ENCODE measurements at regions of chr1 and their contacts with region 1.

Region 1: DNA sequence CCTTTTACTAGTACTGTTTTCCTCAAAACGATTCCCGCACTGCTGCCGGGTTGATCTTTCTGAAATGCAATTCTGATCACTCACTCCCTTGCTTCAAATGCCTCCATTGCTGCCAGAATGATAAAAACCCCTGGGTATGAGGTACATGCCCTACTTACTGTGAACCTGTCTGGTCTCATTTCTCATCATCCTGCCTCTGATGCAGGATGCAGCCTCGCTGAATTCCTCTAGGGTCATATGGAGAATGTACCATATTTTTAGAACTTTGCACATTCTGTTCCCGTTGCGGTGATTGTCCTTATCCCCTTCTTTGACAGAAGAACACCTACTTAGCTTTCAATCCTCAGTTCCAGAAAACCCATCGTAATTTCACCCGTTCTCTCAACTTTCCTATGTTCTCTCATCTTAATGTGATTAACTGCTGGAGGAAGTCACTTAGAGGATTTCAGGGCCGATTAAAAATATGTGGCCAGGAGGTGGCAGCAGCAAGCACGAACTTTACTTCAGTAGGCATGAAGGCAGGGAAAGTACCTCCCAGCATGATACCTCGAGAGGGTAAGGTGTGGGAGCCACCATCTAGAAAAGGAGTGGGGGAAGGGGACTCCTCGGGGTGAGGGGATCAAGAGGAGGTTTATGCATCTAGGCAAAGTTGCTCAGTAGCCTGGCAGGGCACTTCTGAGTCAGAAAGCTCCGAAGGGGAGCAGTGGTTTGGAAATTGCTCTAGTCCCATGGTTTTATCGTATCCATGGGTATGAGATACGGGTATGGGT is 361.5 kb upstream of the ZP4 start:
- DNase-seq: peak; percentile 84
- H3K4me3 Mint-ChIP-seq: no peak overlapping the region
- H3K27ac Mint-ChIP-seq: no peak overlapping the region
- H3K4me1 Mint-ChIP-seq: peaks cover 7% of the 10 kb centered on the region
- H3K27me3 Mint-ChIP-seq: no peaks in the 10 kb centered on the region
- CTCF ChIP-seq: peak; percentile 87

Region 2: GRCh38 chr1:237851210-237851845 is 400.9 kb before region 1 on chr1:
- CTCF ChIA-PET with region 1: interaction called, 11 read pairs
- POLR2A ChIA-PET with region 1: no interaction called
- intact Hi-C with region 1: no loop called
- DNase-seq: peak; percentile 87
- H3K4me3 Mint-ChIP-seq: no peak overlapping the region
- H3K27ac Mint-ChIP-seq: no peak overlapping the region
- H3K4me1 Mint-ChIP-seq: no peaks in the 10 kb centered on the region
- H3K27me3 Mint-ChIP-seq: no peaks in the 10 kb centered on the region
- CTCF ChIP-seq: peak; percentile 97

Region 3: DNA sequence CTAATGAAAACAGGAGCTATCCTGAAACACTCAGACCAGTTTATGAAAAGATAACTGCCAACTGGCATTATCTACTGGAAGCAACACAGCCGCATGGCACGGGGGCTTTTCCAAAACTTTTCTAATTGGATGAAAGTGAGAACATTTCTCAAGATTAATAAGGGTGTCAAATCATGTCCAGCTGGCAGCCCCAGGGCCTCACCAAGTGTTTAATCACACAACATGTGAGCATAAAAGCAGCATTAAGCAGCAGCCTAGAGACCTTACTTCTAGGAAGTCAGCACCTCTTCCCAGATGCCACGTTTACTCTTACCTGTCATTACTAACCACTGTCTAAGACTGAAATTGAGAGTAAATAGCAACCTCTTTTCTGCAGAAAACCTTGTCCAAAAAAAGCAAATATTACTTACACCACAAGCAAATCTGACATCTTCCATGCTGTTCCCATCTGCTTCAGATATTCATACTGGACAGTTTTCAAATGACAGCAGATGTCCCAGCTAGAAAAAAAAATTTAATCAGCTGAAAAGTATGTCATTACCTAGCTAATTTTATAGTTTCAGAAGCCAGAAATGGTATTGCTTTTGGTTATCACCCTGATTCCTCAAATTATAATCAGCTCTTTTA is 20.0 kb before region 1 on chr1:
- CTCF ChIA-PET with region 1: interaction called, 25 read pairs
- POLR2A ChIA-PET with region 1: no interaction called
- intact Hi-C with region 1: no loop called
- DNase-seq: no peak
- H3K4me3 Mint-ChIP-seq: no peak overlapping the region
- H3K27ac Mint-ChIP-seq: no peak overlapping the region
- H3K4me1 Mint-ChIP-seq: no peaks in the 10 kb centered on the region
- H3K27me3 Mint-ChIP-seq: no peaks in the 10 kb centered on the region
- CTCF ChIP-seq: no peak

Region 4: DNA sequence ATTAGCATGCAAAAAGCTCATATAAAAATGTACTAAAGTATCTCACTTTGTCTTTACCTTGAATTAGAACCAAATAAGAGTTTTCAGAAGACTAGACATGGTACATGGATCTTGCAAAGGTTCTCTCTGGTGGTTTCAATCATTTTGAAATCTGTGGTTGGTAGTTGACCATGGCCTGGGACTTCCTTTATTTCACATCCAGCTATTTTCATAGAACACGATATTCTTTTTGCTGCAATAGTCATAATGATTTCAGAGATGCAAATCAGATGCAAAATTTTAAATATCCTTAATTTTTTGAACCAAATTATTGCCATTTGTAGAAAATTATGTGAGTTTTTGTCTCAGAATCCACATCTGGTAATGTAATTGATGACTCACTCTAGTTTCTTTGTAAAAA is 13.6 kb after region 1 on chr1:
- CTCF ChIA-PET with region 1: interaction called, 16 read pairs
- POLR2A ChIA-PET with region 1: interaction called, 3 read pairs
- intact Hi-C with region 1: no loop called
- DNase-seq: no peak
- H3K4me3 Mint-ChIP-seq: no peak overlapping the region
- H3K27ac Mint-ChIP-seq: no peak overlapping the region
- H3K4me1 Mint-ChIP-seq: no peaks in the 10 kb centered on the region
- H3K27me3 Mint-ChIP-seq: no peaks in the 10 kb centered on the region
- CTCF ChIP-seq: no peak

Region 5: GRCh38 chr1:238340989-238341388 is 88.8 kb after region 1 on chr1:
- CTCF ChIA-PET with region 1: no interaction called
- POLR2A ChIA-PET with region 1: no interaction called
- intact Hi-C with region 1: no loop called
- DNase-seq: no peak
- H3K4me3 Mint-ChIP-seq: no peak overlapping the region
- H3K27ac Mint-ChIP-seq: no peak overlapping the region
- H3K4me1 Mint-ChIP-seq: peaks cover 9% of the 10 kb centered on the region
- H3K27me3 Mint-ChIP-seq: no peaks in the 10 kb centered on the region
- CTCF ChIP-seq: no peak

Region 6: GRCh38 chr1:238690415-238690814 is 438.2 kb after region 1 on chr1:
- CTCF ChIA-PET with region 1: interaction called, 23 read pairs
- POLR2A ChIA-PET with region 1: no interaction called
- intact Hi-C with region 1: loop called (anchors 1 kb)
- DNase-seq: peak; percentile 61
- H3K4me3 Mint-ChIP-seq: no peak overlapping the region
- H3K27ac Mint-ChIP-seq: no peak overlapping the region
- H3K4me1 Mint-ChIP-seq: no peaks in the 10 kb centered on the region
- H3K27me3 Mint-ChIP-seq: no peaks in the 10 kb centered on the region
- CTCF ChIP-seq: peak; percentile 25

Region 7: GRCh38 chr1:238960071-238960470 is 707.9 kb after region 1 on chr1:
- CTCF ChIA-PET with region 1: interaction called, 13 read pairs
- POLR2A ChIA-PET with region 1: no interaction called
- intact Hi-C with region 1: no loop called
- DNase-seq: peak; percentile 100
- H3K4me3 Mint-ChIP-seq: peak overlapping the region; percentile 34
- H3K27ac Mint-ChIP-seq: peak overlapping the region; percentile 17
- H3K4me1 Mint-ChIP-seq: peaks cover 38% of the 10 kb centered on the region
- H3K27me3 Mint-ChIP-seq: no peaks in the 10 kb centered on the region
- CTCF ChIP-seq: no peak

Region 8: GRCh38 chr1:239898062-239898730 is 1646.0 kb after region 1 on chr1:
- CTCF ChIA-PET with region 1: interaction called, 6 read pairs
- POLR2A ChIA-PET with region 1: no interaction called
- intact Hi-C with region 1: loop called (anchors 1 kb)
- DNase-seq: peak; percentile 91
- H3K4me3 Mint-ChIP-seq: no peak overlapping the region
- H3K27ac Mint-ChIP-seq: peak overlapping the region; percentile 14
- H3K4me1 Mint-ChIP-seq: peaks cover 15% of the 10 kb centered on the region
- H3K27me3 Mint-ChIP-seq: no peaks in the 10 kb centered on the region
- CTCF ChIP-seq: peak; percentile 97